Activated T-helper 1 cell treated with anti-CD3 and anti-CD28 coated beads, Interleukin-12 subunit alpha, Interleukin-12 subunit beta, Interleukin-2, Interleukin-4 antibody, amounts not matched to agents 30 ng/mL and 10 ng/mL and 1 ng/mL, durations not matched to agents 14 hours and 24 hours and 36 hours (primary cell): ENCODE measurements at regions of chr4 and their contacts with region 1.

Region 1: GRCh38 chr4:98658287-98659105 is at the start of gene TSPAN5:
- DNase-seq: peak; percentile 80
- H3K4me3 Mint-ChIP-seq: peak within 1 kb of the TSS; percentile 96
- H3K27ac Mint-ChIP-seq: peak within 1 kb of the TSS; percentile 95
- H3K4me1 Mint-ChIP-seq: peaks cover 82% of the 10 kb centered on the region
- H3K27me3 Mint-ChIP-seq: no peaks in the 10 kb centered on the region
- total RNA-seq, gene TSPAN5: 34.1 and 35.5 TPM in 2 replicates

Region 2: DNA sequence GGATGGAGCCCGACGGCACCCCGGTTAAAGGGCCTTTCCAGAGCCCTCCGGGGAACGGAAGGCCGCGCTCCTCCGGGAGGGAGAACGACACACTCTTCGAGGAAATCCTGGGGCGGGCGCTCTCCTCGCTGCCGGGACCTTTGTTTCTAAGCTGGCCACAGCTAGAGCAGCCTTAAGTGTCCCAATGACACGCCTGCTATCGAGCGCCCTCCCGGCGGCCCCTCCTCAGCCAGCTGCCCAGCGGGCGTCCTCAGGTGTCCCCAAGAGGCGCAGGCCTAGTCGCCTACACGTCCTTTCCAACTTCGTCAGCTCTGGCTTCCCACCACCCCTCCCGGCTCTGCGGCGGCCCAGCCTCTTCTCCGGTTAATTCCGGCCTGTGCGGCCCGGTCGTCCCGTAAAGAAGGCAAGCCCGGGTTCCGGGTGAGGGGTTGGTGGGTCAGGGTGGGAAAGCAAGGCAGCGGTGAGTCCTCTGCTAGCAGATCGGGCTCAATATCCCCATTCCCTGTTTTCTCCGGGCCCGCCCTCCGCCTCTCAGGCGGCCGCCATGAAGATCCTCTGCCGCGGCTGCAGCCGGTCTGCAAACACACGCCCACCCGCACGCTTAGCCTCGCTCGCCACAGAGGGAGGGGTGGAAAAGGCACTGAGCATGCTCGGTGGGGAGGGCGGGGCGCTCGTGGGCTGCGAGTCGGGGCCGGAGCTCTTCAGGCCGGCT is 397.8 kb before region 1 on chr4:
- intact Hi-C with region 1: loop called (anchors 1 kb)
- DNase-seq: peak; percentile 89
- H3K4me3 Mint-ChIP-seq: peak overlapping the region; percentile 96
- H3K27ac Mint-ChIP-seq: peak overlapping the region; percentile 97
- H3K4me1 Mint-ChIP-seq: peaks cover 55% of the 10 kb centered on the region
- H3K27me3 Mint-ChIP-seq: no peaks in the 10 kb centered on the region

Region 3: GRCh38 chr4:98467627-98468072 is 190.8 kb before region 1 on chr4:
- intact Hi-C with region 1: loop called (anchors 1 kb)
- DNase-seq: peak; percentile 63
- H3K4me3 Mint-ChIP-seq: peak overlapping the region; percentile 69
- H3K27ac Mint-ChIP-seq: peak overlapping the region; percentile 29
- H3K4me1 Mint-ChIP-seq: peaks cover 54% of the 10 kb centered on the region
- H3K27me3 Mint-ChIP-seq: no peaks in the 10 kb centered on the region

Region 4: DNA sequence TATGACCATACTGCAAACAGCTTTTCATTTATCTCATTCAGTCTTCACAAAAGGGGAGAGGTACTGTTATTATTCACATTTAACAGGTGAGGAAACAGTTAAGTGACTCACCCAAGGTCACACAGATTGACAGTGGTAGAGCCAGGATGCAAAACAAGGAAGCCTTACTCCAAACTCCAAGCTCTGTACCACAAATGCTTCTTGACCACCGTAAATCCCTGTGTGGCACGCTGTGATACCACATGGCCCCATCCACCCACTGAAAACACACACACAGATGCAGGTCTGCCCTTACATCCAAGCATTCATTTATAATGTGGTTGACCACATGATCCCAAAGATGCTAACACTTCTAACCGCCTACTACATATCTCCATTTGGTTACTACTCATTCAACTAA is 129.6 kb before region 1 on chr4:
- intact Hi-C with region 1: loop called (anchors 1 kb)
- DNase-seq: no peak
- H3K4me3 Mint-ChIP-seq: peak overlapping the region; percentile 9
- H3K27ac Mint-ChIP-seq: peak overlapping the region; percentile 64
- H3K4me1 Mint-ChIP-seq: peaks cover 54% of the 10 kb centered on the region
- H3K27me3 Mint-ChIP-seq: no peaks in the 10 kb centered on the region

Region 5: GRCh38 chr4:98612318-98613250 is 45.9 kb before region 1 on chr4:
- intact Hi-C with region 1: no loop called
- DNase-seq: no peak
- H3K4me3 Mint-ChIP-seq: no peak overlapping the region
- H3K27ac Mint-ChIP-seq: no peak overlapping the region
- H3K4me1 Mint-ChIP-seq: peaks cover 61% of the 10 kb centered on the region
- H3K27me3 Mint-ChIP-seq: no peaks in the 10 kb centered on the region

Region 6: DNA sequence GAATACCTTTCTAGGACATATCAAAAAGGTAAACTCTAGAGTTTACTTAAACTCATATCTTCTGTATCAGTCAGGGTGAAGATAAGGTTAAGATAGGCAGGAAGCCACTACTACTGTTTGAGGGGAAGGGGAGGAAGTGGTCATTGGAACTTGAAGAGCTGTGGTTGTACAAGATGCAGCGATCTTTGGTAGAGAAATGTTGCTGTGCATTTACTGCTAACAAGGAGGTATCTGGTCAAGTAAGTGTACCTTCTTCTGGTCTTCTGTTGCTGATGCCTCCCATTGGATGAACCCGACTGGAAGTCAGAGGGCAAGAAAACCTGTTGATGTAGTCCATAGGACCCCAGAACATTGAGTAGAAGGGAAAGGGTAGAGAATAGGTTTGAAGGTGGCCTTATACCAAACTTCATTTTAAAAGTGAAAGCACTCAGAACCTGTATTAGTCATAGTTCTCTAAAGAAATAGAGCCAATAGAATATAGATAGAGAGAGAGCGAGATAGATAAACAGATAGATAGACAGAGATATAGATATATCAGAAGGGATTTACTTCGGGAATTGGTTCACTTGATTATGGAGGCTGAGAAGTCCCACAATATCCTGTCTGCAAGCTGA is 47.8 kb after region 1 on chr4:
- intact Hi-C with region 1: loop called (anchors 1 kb)
- DNase-seq: peak; percentile 42
- H3K4me3 Mint-ChIP-seq: peak overlapping the region; percentile 68
- H3K27ac Mint-ChIP-seq: peak overlapping the region; percentile 79
- H3K4me1 Mint-ChIP-seq: peaks cover 27% of the 10 kb centered on the region
- H3K27me3 Mint-ChIP-seq: peaks cover 1% of the 10 kb centered on the region

Region 7: DNA sequence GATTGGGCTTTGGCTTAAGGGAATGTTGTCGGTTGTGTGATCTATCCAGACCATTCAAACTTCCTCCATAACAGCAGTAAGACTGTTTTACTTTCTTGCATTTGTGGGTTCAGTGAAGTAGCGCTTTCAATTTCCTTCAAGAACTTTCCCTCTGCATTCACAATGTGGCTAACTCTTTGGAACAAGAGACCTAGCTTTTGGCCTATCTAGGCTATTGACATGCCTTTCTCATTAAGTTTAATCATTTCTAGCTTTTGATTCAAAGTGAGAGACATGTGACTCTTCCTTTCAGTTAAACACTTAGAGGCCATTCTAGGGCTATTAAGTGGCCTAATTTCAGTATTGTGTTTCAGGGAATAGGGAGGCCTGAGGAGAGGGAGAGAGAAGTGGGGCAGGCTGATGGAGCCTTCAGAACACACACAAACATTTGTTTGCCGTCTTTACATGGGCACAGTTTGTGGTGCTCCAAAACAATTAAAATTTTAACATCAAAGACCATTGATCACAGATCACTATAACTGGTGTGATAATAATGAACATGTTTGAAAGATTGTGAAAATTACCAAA is 396.0 kb after region 1 on chr4:
- intact Hi-C with region 1: loop called (anchors 2 kb)
- DNase-seq: no peak
- H3K4me3 Mint-ChIP-seq: no peak overlapping the region
- H3K27ac Mint-ChIP-seq: peak overlapping the region; percentile 7
- H3K4me1 Mint-ChIP-seq: peaks cover 49% of the 10 kb centered on the region
- H3K27me3 Mint-ChIP-seq: no peaks in the 10 kb centered on the region

Region 8: DNA sequence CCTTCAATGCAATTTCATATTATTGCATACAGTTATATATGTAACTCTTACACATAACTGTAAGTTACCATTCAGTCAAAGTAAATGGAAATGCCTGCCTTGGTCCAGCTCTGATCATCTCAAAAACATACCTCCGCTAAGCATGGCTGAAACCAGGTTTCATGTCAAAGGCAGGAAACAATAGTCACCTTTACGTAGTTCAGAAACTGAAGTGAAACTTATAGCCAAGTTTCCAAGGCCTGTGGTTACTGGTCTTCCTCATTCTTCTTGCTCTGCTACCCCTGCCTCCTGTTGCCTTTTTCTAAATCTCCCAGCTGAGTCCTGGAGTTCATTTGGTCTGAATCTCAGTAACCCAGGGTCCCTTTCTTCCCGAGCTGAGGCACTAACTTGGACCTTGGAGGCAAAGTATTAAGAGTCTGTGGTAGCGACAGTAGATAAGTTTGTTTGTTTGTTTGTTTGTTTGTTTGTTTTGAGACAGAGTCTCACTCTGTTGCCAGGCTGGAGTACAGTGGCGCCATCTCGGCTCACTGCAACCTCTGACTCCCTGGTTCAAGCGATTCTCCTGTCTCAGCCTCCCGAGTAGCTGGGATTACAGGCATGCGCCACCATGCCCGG is 1189.0 kb after region 1 on chr4:
- intact Hi-C with region 1: loop called (anchors 5 kb)
- DNase-seq: no peak
- H3K4me3 Mint-ChIP-seq: peak overlapping the region; percentile 59
- H3K27ac Mint-ChIP-seq: peak overlapping the region; percentile 95
- H3K4me1 Mint-ChIP-seq: peaks cover 83% of the 10 kb centered on the region
- H3K27me3 Mint-ChIP-seq: no peaks in the 10 kb centered on the region